ENCODE measurements at regions of chr3 and their contacts with region 1.

Region 1: GRCh38 chr3:5304789-5305683 is 117.5 kb downstream of the EDEM1 start:
- DNase-seq: peak; percentile 70
- ATAC-seq: peak; percentile 81
- H3K4me3 Mint-ChIP-seq: no peak overlapping the region
- H3K27ac Mint-ChIP-seq: no peak overlapping the region
- H3K4me1 Mint-ChIP-seq: no peaks in the 10 kb centered on the region
- H3K27me3 Mint-ChIP-seq: peaks cover 3% of the 10 kb centered on the region

Region 2: DNA sequence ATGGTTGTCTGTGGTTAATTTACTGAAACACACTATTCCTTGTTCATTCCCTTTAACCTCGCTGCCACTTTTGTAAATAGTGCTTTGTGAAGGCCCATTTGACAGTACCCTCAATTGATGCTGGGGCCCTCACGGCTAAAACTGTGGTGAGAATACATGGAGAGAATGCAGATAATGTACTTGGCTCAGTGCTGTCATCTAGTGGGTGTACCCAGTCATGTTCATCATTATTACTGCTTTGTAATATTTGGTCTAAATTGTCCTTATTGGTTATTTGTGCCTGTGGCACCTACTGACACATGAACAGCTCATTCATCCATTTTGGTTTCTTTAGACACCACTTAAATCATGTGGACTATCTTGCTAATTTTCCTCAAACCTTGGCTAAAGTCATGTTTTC is 426.1 kb after region 1 on chr3:
- CTCF ChIA-PET with region 1: no interaction called
- POLR2A ChIA-PET with region 1: no interaction called
- intact Hi-C with region 1: loop called in 1 of 2 experiments (anchors 2 kb)
- DNase-seq: no peak
- ATAC-seq: no peak
- H3K4me3 Mint-ChIP-seq: no peak overlapping the region
- H3K27ac Mint-ChIP-seq: no peak overlapping the region
- H3K4me1 Mint-ChIP-seq: no peaks in the 10 kb centered on the region
- H3K27me3 Mint-ChIP-seq: no peaks in the 10 kb centered on the region

Region 3: GRCh38 chr3:6799264-6799915 is 1494.4 kb after region 1 on chr3:
- CTCF ChIA-PET with region 1: no interaction called
- POLR2A ChIA-PET with region 1: no interaction called
- intact Hi-C with region 1: loop called (anchors 1 to 10 kb)
- DNase-seq: peak; percentile 66
- ATAC-seq: no peak
- H3K4me3 Mint-ChIP-seq: no peak overlapping the region
- H3K27ac Mint-ChIP-seq: no peak overlapping the region
- H3K4me1 Mint-ChIP-seq: no peaks in the 10 kb centered on the region
- H3K27me3 Mint-ChIP-seq: no peaks in the 10 kb centered on the region